ENCODE measurements at regions of chr1 and their contacts with region 1.

Region 1: DNA sequence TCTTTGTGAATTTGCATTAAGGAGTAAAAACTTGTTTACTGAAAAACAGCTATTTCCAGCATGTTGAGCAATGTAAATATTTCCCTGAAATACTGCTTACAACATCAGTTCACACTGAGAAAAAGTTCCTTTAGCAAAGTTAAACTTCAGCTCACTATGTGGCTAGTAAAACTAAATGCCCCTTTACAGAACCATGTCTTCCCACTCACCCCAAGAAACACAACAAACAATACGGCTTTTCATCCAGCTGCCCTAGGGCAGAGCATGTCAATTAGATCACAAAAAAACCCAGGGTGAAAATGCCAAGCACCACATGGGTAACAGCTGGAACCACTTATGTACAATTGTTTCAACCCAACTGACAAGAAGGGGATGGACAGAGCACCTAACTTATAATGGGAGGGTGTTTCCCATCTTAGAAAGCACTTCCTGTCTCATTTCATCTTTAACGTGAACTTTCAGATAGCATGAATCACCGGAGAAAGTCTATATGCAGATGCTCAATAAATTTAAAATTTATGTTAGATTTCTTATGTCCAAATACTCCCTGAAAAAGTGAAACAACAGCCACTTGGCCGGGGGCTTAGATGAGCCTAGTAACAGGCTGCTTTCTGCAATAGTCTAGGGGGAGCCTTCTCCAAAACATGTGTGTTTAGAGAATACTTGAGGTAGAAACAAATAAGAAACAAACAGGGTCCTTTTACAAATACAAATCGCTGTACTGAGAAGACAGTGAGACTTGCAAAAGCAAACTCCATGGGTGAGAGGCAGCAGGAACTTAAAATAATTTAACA is 6.6 kb downstream of the NID1 start:
- DNase-seq: no peak
- ATAC-seq: no peak
- H3K4me3 ChIP-seq: no peak overlapping the region
- H3K27ac ChIP-seq: no peak overlapping the region
- H3K4me1 ChIP-seq: no peaks in the 10 kb centered on the region
- H3K27me3 ChIP-seq: no peaks in the 10 kb centered on the region

Region 2: GRCh38 chr1:236009857-236010256 is 48.5 kb before region 1 on chr1:
- intact Hi-C with region 1: loop called in 1 of 2 experiments (anchors 10 kb)
- DNase-seq: no peak
- ATAC-seq: peak; percentile 77
- H3K4me3 ChIP-seq: no peak overlapping the region
- H3K27ac ChIP-seq: no peak overlapping the region
- H3K4me1 ChIP-seq: no peaks in the 10 kb centered on the region
- H3K27me3 ChIP-seq: no peaks in the 10 kb centered on the region

Measured in aorta (tissue), 5 donors.